Adrenal gland (tissue), 19 donors: ENCODE measurements at regions of chr6 and their contacts with region 1.

Region 1: DNA sequence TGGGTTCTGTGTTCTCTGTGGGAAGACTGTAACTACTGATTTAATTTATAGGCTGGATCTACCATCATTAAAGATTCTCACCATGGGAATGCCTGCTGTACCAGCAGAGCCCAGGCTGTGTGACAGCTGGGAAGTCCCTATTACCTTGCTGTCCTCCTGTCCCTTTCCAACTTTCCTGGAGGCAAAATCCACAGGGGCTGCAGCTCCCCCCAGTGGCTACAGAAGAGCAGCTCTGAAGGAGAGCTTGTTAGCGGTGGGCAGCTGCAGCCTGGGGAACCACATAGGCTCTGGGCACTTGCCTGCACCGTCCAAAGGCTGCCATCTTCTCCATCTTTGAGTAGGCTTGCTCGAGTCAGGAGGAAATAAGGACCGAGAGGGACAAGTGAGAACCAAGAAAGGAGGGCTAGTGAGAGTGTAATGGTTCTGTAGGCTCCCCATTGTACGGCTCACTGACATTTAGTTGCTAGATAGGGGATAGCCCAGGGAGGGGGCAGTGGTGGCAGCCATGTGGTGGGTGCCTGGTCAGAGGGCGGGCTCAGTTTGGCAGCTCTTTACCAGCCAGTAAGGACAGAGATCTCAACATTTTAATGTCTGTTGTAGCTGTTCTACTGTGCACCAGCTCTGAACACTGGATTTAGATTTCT is 155.1 kb upstream of the MLIP start:
- DNase-seq: peak; percentile 44 to 81 (median 63)
- H3K4me3 ChIP-seq: no peak overlapping the region
- H3K27ac ChIP-seq: no peak overlapping the region
- H3K4me1 ChIP-seq: no peaks in the 10 kb centered on the region
- H3K27me3 ChIP-seq: no peaks in the 10 kb centered on the region
- CTCF ChIP-seq: peak; percentile 32 to 77 (median 55)
- POLR2A ChIP-seq: no peak

Region 2: DNA sequence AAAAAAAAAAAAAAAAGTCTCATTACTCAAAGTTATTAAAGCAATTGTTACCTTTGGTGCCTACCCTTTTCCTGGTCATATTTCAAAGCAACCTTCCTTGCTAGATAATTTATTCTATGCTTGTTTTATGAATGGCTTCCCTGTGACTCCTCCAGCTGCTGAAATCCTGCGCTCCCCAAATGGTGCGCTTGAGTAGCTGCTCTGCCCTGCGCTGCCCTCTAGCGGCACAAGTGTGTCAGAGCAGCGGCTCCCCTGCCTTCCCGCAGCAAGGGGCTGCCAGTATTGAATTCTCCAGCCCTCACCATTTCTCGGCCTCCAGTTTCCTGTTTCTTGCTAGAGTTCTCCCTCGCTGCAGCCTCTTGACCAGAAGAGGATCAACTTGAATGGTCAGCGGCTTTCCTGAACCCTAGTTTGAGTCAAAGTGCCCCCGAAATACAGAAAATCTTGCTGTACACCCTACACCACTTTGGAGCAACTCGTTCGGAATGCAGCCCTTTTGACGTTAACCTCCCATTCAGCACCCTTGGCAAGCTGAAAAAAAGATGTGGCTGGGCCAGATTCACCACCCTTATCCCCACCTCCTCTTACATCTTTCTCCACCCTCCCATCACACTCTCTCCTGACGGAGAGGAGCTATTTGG is 230.3 kb before region 1 on chr6:
- intact Hi-C with region 1: loop called (anchors 5 to 10 kb)
- DNase-seq: peak; percentile 62 to 87 (median 81)
- H3K4me3 ChIP-seq: no peak overlapping the region
- H3K27ac ChIP-seq: no peak overlapping the region
- H3K4me1 ChIP-seq: no peaks in the 10 kb centered on the region
- H3K27me3 ChIP-seq: no peaks in the 10 kb centered on the region
- CTCF ChIP-seq: peak; percentile 83 to 98 (median 89)
- POLR2A ChIP-seq: no peak

Region 3: DNA sequence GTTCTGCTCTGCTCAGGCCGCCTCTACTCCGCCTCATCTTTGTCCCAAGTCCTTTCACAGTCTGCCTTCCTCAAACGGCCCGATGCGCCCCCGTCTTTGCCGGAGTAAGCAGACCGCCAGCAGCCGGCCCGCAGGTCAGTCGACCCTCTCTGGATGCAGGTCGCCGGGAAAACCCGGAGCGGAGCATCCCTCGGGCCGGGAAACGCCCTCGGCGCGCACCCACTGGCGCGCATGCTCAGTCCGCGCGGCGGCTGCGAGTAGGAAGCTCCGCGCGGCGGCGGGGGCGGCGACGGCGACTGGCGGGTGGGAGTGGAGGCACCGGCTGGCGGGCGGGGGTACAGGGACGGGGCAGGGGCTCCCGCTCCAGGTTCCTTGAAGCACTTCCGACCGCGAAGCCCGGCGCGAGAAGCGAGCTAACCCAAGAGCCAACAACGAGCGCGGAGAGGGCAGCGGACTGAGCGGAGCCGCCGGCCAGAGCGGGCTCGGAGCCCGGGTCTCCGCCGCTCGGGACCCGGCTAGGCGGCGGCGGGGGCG is 161.4 kb before region 1 on chr6 and contains the start of gene LRRC1:
- intact Hi-C with region 1: loop called (anchors 10 kb)
- DNase-seq: peak; percentile 86 to 94 (median 91)
- H3K4me3 ChIP-seq: peak within 1 kb of the TSS; percentile 4 to 94 (median 88)
- H3K27ac ChIP-seq: peak within 1 kb of the TSS; percentile 6 to 81 (median 52)
- H3K4me1 ChIP-seq: peaks cover 10 to 23% of the 10 kb centered on the region in 2 donors
- H3K27me3 ChIP-seq: no peaks in the 10 kb centered on the region
- CTCF ChIP-seq: peak in 1 of 6 experiments; percentile 21
- POLR2A ChIP-seq: peak; percentile 72 to 77
- total RNA-seq, gene LRRC1: 2.1 to 7.8 (median 4.4) TPM

Region 4: DNA sequence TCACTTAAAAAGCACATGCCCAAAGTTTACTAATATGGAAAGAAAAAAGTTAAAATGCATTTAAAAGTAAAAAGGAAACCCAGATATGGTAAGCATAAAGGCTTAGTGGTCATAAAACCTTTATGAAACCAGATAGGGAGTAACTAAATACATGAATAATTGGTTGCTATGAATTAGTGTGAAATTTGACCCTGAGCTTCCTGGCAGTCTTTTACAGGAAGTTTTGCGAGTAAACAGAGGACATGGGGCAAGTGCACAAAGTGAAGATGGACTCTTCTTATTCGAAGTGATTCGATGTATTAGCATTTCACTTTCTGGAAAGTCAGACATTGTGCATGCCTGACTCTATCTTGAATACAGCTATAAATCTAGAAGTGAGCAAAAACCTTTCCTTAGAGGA is 64.1 kb after region 1 on chr6:
- intact Hi-C with region 1: no loop called
- DNase-seq: peak in 2 of 7 donors; percentile 23 to 31
- H3K4me3 ChIP-seq: no peak overlapping the region
- H3K27ac ChIP-seq: peak overlapping the region in 1 of 5 donors; percentile 8
- H3K4me1 ChIP-seq: peaks cover 0 to 4% of the 10 kb centered on the region in 2 donors
- H3K27me3 ChIP-seq: no peaks in the 10 kb centered on the region
- CTCF ChIP-seq: no peak
- POLR2A ChIP-seq: no peak